BJ (cell line): ENCODE measurements at regions of chr7 and their contacts with region 1.

Region 1: GRCh38 chr7:26853788-26854393 is 10.5 kb downstream of the SKAP2 start:
- DNase-seq: no peak
- H3K4me3 ChIP-seq: no peak overlapping the region
- H3K27me3 ChIP-seq: no peaks in the 10 kb centered on the region
- CTCF ChIP-seq: peak; percentile 64

Region 2: GRCh38 chr7:26864309-26865093 is 10.6 kb after region 1 on chr7 and contains the start of gene SKAP2:
- CTCF ChIA-PET with region 1: interaction called, 12 read pairs
- POLR2A ChIA-PET with region 1: no interaction called
- DNase-seq: peak; percentile 95
- H3K4me3 ChIP-seq: peak within 1 kb of the TSS; percentile 87
- H3K27me3 ChIP-seq: no peaks in the 10 kb centered on the region
- CTCF ChIP-seq: no peak
- polyA plus RNA-seq, gene SKAP2: 2.7 and 5.2 TPM in 2 replicates

Region 3: GRCh38 chr7:26976840-26977239 is 122.9 kb after region 1 on chr7:
- CTCF ChIA-PET with region 1: no interaction called
- POLR2A ChIA-PET with region 1: no interaction called
- DNase-seq: no peak
- H3K4me3 ChIP-seq: no peak overlapping the region
- H3K27me3 ChIP-seq: no peaks in the 10 kb centered on the region
- CTCF ChIP-seq: no peak

Region 4: DNA sequence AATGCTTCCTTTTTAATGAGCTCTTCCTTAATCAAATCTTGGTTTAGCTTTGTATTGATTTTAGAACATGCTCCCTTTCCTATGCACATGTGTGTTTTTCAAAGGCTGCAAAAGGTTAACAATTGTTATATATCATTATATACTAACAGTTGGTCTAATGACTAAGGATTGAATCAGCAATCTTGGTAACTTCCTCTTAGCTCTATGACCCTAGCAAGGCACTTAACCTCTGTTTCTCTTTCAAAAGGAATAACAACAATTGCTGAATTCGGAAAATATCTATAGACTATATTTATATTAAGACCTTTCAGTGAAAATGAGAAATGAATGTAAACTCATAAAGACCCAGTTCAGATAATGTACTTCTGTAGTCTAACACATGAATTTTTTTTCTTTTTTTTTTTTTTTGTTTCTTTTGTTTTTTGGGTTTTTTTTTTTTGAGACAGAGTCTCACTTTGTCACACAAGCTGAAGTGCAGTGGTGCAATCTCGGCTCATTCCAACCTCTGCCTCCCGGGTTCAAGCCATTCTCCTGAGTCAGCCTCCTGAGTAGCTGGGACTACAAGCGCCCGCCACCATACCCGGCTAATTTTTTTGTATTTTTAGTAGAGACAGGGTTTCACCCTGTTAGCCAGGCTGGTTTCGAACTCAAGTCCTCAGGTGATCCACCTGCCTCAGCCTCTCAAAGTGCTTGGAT is 193.1 kb after region 1 on chr7:
- CTCF ChIA-PET with region 1: no interaction called
- POLR2A ChIA-PET with region 1: no interaction called
- DNase-seq: no peak
- H3K4me3 ChIP-seq: no peak overlapping the region
- H3K27me3 ChIP-seq: no peaks in the 10 kb centered on the region
- CTCF ChIP-seq: no peak

Region 5: GRCh38 chr7:27130540-27131389 is 276.9 kb after region 1 on chr7 and contains the start of gene HOXA4:
- CTCF ChIA-PET with region 1: interaction called, 10 read pairs
- POLR2A ChIA-PET with region 1: no interaction called
- DNase-seq: no peak
- H3K4me3 ChIP-seq: peak within 1 kb of the TSS; percentile 78
- H3K27me3 ChIP-seq: no peaks in the 10 kb centered on the region
- CTCF ChIP-seq: no peak
- polyA plus RNA-seq, gene HOXA4: 1.2 and 1.3 TPM in 2 replicates